Dendritic cell treated with granulocyte-macrophage colony-stimulating factor and Interleukin-4, amounts not matched to agents 40 ng/mL and 50 ng/mL, for 4 days (primary cell): ENCODE measurements at regions of chr1 and their contacts with region 1.

Region 1: GRCh38 chr1:119917304-119918055 is 21.2 kb upstream of the ADAM30 start:
- H3K4me3 Mint-ChIP-seq: no peak overlapping the region
- H3K27ac Mint-ChIP-seq: no peak overlapping the region
- H3K4me1 Mint-ChIP-seq: no peaks in the 10 kb centered on the region
- H3K27me3 Mint-ChIP-seq: no peaks in the 10 kb centered on the region

Region 2: DNA sequence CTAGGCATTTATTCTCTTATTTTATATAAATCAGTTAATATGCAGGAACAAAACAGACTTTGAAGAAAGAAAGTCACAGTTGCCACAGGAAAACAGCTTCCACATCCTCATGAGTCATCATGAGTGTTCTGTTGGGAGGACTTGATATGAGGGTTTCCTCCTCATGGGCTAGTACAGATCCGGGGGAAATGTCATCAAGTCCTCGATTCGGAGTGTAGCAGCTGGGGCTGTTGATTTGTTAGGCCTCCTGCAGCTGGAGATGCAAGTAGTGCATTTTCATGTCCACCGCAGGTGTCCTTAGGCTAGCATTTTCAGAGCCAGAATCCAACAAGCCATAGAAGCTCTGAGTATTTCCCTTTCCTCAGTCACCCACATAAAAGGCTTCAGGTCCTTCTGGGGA is 57.8 kb before region 1 on chr1:
- intact Hi-C with region 1: loop called (anchors 10 kb)
- H3K4me3 Mint-ChIP-seq: no peak overlapping the region
- H3K27ac Mint-ChIP-seq: no peak overlapping the region
- H3K4me1 Mint-ChIP-seq: peaks cover 26% of the 10 kb centered on the region
- H3K27me3 Mint-ChIP-seq: no peaks in the 10 kb centered on the region

Region 3: GRCh38 chr1:119968068-119968492 is 50.6 kb after region 1 on chr1:
- intact Hi-C with region 1: loop called (anchors 10 kb)
- H3K4me3 Mint-ChIP-seq: no peak overlapping the region
- H3K27ac Mint-ChIP-seq: peak overlapping the region; percentile 23
- H3K4me1 Mint-ChIP-seq: peaks cover 37% of the 10 kb centered on the region
- H3K27me3 Mint-ChIP-seq: no peaks in the 10 kb centered on the region